Heart left ventricle (tissue), 16 donors: ENCODE measurements at regions of chr4 and their contacts with region 1.

Region 1: DNA sequence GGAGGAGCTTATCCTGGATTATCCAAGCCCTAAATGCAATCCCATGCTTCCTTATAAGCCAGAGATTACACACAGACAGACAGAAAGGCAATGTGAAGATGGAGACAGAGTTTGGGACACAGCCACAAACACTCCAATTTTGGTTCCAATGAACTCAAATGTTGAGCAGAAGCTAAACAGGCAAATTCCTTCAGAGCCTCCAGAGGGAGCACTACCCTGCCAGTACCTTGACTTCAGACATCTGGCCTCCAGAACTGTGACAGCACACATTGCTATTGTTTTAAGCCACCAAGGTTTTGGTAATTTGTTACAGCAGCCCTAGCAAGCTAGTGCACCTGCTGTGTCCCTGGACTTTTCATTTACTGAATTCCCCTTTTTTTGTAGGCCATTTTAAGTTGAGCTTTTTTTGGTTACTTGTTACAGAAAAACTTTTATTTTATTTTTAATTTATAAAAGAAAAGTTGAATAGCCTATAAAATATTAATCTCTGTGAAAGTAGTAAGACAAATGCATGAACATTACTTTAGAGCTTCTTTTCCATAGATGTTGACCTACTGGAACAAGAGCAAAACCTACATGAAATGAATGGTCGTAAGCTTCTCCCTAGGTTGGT is 33.4 kb upstream of the SRD5A3 start:
- DNase-seq: peak in 4 of 5 donors; percentile 45 to 52 (median 50)
- ATAC-seq: peak; percentile 33 to 94 (median 87)
- H3K4me3 ChIP-seq: no peak overlapping the region
- H3K27ac ChIP-seq: peak overlapping the region in 4 of 12 donors; percentile 8 to 27 (median 20)
- H3K4me1 ChIP-seq: peaks cover 0 to 12% (median 0%) of the 10 kb centered on the region in 12 donors
- H3K27me3 ChIP-seq: no peaks in the 10 kb centered on the region
- CTCF ChIP-seq: peak; percentile 53 to 79 (median 64)
- POLR2A ChIP-seq: no peak

Region 2: DNA sequence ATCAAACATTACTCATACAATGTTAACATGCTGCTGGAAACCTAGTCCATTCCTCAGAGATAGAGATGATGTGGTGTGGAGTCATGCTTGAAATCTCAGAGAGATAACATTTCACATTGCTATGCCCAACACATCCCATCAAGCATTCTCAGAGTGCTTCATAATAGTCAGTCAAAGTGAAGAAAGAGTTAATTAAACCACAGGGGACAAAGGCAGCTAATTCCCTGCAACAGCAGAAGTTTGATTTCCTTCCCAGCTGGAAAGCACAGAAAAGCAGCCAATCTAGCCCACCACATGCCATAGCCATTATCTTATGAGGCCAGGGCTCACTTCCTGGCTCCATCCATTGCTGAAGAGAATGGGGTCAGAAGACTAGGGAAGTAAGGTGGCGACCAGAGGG is 196.1 kb before region 1 on chr4:
- intact Hi-C with region 1: loop called in 5 of 10 experiments (anchors 5 to 10 kb)
- DNase-seq: no peak
- ATAC-seq: peak in 1 of 4 donors; percentile 48
- H3K4me3 ChIP-seq: no peak overlapping the region
- H3K27ac ChIP-seq: peak overlapping the region in 2 of 12 donors; percentile 2 to 44
- H3K4me1 ChIP-seq: peaks cover 0 to 23% (median 2%) of the 10 kb centered on the region in 12 donors
- H3K27me3 ChIP-seq: no peaks in the 10 kb centered on the region
- CTCF ChIP-seq: no peak
- POLR2A ChIP-seq: no peak

Region 3: DNA sequence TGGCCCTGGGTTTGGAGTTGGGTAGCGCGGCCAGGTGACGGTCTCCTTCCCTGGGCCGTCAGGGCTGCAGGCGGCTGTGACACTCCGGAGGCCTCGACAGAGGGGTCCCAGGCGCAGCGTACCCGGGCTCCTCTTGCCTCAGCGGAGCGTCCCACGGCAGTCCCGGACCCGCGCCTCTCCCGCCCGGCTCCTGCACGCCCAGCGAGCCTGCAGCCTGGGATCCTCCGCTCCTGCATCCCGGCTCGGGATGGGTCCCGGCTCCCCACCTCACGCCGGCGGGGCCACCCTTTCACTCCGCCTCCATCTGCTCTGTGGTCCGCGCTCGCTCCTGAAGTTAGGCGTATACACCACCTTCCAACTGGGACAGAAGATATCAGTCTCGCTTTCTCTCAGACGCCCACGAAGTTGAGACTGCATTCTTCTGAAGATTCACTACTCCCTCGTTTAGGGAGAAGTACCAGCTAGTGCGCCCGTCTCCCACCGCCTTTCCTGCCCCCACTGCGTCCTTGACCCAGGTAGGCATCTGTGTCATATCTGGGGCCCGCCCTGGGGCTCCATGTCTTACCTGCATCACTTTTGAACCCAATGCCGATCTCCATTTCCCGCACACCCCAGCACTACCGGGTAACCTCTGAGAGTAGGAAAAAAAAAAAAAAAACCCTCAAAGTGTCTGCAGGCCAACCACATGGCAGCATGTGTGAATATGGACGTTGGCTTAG is 154.9 kb before region 1 on chr4:
- intact Hi-C with region 1: no loop called
- DNase-seq: peak in 1 of 5 donors; percentile 66
- ATAC-seq: peak in 1 of 4 donors; percentile 33
- H3K4me3 ChIP-seq: peak overlapping the region in 8 of 12 donors; percentile 2 to 44 (median 31)
- H3K27ac ChIP-seq: no peak overlapping the region
- H3K4me1 ChIP-seq: peaks cover 0 to 3% (median 0%) of the 10 kb centered on the region in 12 donors
- H3K27me3 ChIP-seq: peaks cover 0 to 32% (median 4%) of the 10 kb centered on the region in 9 donors
- CTCF ChIP-seq: no peak
- POLR2A ChIP-seq: no peak

Region 4: DNA sequence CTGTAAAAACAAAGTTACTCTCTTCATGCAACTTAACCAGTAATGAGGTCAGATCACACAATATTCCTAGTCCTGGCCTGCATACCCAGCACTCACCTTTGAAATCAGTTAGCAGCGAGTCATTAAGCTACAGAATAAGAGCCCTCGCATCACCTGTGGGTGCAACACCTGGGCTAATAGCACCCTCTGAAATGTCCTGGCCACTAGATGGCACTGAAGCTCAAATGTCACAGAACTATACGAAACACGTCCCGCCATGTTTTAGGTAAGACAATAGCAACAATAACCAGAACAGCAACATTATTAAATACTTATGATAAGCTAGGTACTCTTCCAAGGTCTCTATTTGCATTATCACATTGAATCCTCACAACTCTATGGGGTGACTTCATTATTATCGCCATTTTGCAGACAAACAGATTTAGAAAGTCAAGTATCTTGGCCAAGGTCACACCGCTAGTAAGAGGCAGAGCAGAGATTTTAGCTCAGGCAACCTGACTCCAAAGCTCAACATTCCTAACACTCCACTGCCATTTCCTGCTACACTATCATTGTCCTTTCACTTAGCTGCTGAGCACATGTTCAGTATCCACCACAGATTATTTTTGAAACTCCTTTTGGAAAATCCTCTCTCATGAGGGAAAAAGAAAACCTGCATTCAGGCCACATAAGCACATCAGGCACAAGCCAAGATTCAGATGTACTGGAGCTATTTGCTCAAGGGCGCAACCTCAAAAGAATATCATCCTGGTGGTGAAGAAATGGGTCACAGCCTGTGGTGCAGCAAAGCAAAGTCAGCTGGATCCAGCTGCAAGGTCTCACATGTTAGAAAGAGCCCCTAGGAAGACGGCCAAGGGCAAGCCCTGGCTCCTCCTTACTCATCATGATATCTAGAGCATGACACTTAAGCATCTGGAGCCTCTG is 127.7 kb before region 1 on chr4:
- intact Hi-C with region 1: loop called in 4 of 10 experiments (anchors 5 to 10 kb)
- DNase-seq: peak in 3 of 5 donors; percentile 27 to 47 (median 41)
- ATAC-seq: peak; percentile 53 to 72 (median 60)
- H3K4me3 ChIP-seq: no peak overlapping the region
- H3K27ac ChIP-seq: peak overlapping the region in 7 of 12 donors; percentile 7 to 29 (median 20)
- H3K4me1 ChIP-seq: peaks cover 0 to 37% (median 19%) of the 10 kb centered on the region in 12 donors
- H3K27me3 ChIP-seq: no peaks in the 10 kb centered on the region
- CTCF ChIP-seq: peak in 6 of 12 donors; percentile 10 to 39 (median 20)
- POLR2A ChIP-seq: no peak